A549 (cell line): ENCODE measurements at regions of chr6 and their contacts with region 1.

Region 1: DNA sequence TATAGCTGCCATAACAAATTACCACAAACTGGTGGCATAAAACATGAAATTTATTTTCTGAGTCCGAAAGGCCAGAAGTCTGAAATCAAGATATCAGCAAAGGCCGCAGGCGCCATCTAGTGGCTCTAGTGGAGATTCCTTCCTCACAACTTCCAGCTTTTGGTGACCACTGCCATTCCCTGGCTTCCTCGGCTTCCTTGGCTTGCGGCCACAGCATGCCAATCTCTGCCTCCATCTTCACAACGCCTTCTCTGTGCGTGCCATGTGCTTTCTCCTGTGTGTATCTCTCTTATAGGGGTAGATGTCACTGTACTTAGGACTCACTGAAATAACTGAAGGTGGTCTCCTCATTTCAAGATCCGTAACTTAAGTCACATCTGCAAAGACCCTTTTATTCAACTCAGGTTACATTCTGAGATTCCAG is 5.4 kb upstream of the PLAGL1 start:
- DNase-seq: peak; percentile 13 to 72
- ATAC-seq: peak; percentile 82 to 83; a peak in 5 of 6 replicates
- H3K4me3 ChIP-seq: no peak overlapping the region
- H3K27ac ChIP-seq: no peak overlapping the region
- H3K4me1 ChIP-seq: no peaks in the 10 kb centered on the region
- CTCF ChIP-seq: peak; percentile 85
- EP300 ChIP-seq: no peak
- POLR2A ChIP-seq: no peak
- RAD21 ChIP-seq: peak; percentile 87 to 88

Region 2: GRCh38 chr6:143575440-143575839 is 438.1 kb before region 1 on chr6:
- CTCF ChIA-PET with region 1: interaction called, 46 read pairs
- POLR2A ChIA-PET with region 1: no interaction called
- DNase-seq: peak; percentile 73 to 77
- ATAC-seq: peak; percentile 73 to 84
- H3K4me3 ChIP-seq: no peak overlapping the region
- H3K27ac ChIP-seq: no peak overlapping the region
- H3K4me1 ChIP-seq: no peaks in the 10 kb centered on the region
- CTCF ChIP-seq: peak; percentile 79
- EP300 ChIP-seq: no peak
- POLR2A ChIP-seq: no peak
- RAD21 ChIP-seq: peak; percentile 89 to 90

Region 3: GRCh38 chr6:143583542-143584327 is 429.8 kb before region 1 on chr6:
- CTCF ChIA-PET with region 1: interaction called, 22 read pairs
- POLR2A ChIA-PET with region 1: no interaction called
- DNase-seq: no peak
- ATAC-seq: no peak
- H3K4me3 ChIP-seq: no peak overlapping the region
- H3K27ac ChIP-seq: no peak overlapping the region
- H3K4me1 ChIP-seq: no peaks in the 10 kb centered on the region
- CTCF ChIP-seq: no peak
- EP300 ChIP-seq: no peak
- POLR2A ChIP-seq: no peak
- RAD21 ChIP-seq: no peak

Region 4: GRCh38 chr6:143940011-143940597 is 73.4 kb before region 1 on chr6:
- CTCF ChIA-PET with region 1: interaction called, 17 read pairs
- POLR2A ChIA-PET with region 1: no interaction called
- DNase-seq: peak; percentile 65 to 66
- ATAC-seq: peak; percentile 85 to 89
- H3K4me3 ChIP-seq: no peak overlapping the region
- H3K27ac ChIP-seq: no peak overlapping the region
- H3K4me1 ChIP-seq: no peaks in the 10 kb centered on the region
- CTCF ChIP-seq: peak; percentile 62
- EP300 ChIP-seq: no peak
- POLR2A ChIP-seq: no peak
- RAD21 ChIP-seq: peak; percentile 41 to 48; a peak in 3 of 5 replicates